Activated CD8-positive, alpha-beta T cell treated with anti-CD3 and anti-CD28 coated beads, Interleukin-2, amount 10 ng/mL, durations not matched to agents 7 days and 5 days (primary cell): ENCODE measurements at regions of chr14 and their contacts with region 1.

Region 1: DNA sequence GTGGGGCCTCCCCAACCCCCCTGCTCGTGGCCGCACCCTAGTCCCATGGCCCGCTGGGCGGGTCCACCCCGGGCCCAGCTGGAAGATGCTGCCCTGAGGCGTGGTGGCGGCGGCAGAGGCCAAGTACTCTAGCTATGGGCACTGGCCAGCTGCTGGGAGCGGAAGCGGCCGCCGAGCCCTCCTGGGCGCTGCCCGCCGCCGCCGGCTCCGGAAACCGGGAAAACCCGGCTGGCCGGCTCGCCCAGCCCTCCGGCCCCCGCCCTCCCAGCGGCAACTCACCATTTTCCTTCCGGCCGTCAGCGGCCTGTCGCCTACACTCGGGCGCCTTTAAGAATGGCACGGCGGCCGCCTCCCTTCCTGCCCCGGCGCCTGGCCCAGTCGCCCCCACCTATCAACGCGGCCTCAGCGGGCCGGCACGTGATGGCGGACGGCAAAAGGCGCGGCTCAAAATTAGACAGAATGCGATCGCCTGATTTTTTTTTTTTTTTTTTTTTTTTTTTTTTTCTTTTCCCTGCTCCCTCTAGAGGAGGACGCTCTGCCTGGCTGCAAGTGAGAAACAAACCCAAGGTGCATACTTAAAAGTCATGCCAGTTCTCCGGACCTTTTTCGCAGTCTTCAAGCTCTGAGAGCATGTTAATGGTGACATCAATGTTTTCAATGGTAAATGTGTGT is at the start of gene GMFB:
- DNase-seq: peak; percentile 91
- ATAC-seq: peak; percentile 97
- H3K4me3 Mint-ChIP-seq: peak within 1 kb of the TSS; percentile 95
- H3K27ac Mint-ChIP-seq: peak within 1 kb of the TSS; percentile 87
- H3K4me1 Mint-ChIP-seq: peaks cover 52% of the 10 kb centered on the region
- H3K27me3 Mint-ChIP-seq: no peaks in the 10 kb centered on the region
- total RNA-seq, gene GMFB: 28.1 to 34.1 TPM

Region 2: GRCh38 chr14:54440873-54441868 is 47.6 kb before region 1 on chr14 and contains the start of gene CNIH1:
- CTCF ChIA-PET with region 1: interaction called, 11 read pairs
- POLR2A ChIA-PET with region 1: no interaction called
- DNase-seq: peak; percentile 93
- ATAC-seq: peak; percentile 95
- H3K4me3 Mint-ChIP-seq: peak within 1 kb of the TSS; percentile 82
- H3K27ac Mint-ChIP-seq: peak within 1 kb of the TSS; percentile 88
- H3K4me1 Mint-ChIP-seq: peaks cover 40% of the 10 kb centered on the region
- H3K27me3 Mint-ChIP-seq: peaks cover 10% of the 10 kb centered on the region
- total RNA-seq, gene CNIH1: 60.5 to 65.1 TPM

Region 3: GRCh38 chr14:54509546-54510501 is 21.0 kb after region 1 on chr14 and contains the start of gene CGRRF1:
- CTCF ChIA-PET with region 1: interaction called, 18 read pairs
- POLR2A ChIA-PET with region 1: interaction called, 18 read pairs
- DNase-seq: peak; percentile 97
- ATAC-seq: peak; percentile 99
- H3K4me3 Mint-ChIP-seq: peak within 1 kb of the TSS; percentile 93
- H3K27ac Mint-ChIP-seq: peak within 1 kb of the TSS; percentile 87
- H3K4me1 Mint-ChIP-seq: peaks cover 34% of the 10 kb centered on the region
- H3K27me3 Mint-ChIP-seq: peaks cover 8% of the 10 kb centered on the region
- total RNA-seq, gene CGRRF1: 13.6 to 13.7 TPM